Transverse colon (tissue), 4 donors: ENCODE measurements at regions of chr17 and their contacts with region 1.

Region 1: DNA sequence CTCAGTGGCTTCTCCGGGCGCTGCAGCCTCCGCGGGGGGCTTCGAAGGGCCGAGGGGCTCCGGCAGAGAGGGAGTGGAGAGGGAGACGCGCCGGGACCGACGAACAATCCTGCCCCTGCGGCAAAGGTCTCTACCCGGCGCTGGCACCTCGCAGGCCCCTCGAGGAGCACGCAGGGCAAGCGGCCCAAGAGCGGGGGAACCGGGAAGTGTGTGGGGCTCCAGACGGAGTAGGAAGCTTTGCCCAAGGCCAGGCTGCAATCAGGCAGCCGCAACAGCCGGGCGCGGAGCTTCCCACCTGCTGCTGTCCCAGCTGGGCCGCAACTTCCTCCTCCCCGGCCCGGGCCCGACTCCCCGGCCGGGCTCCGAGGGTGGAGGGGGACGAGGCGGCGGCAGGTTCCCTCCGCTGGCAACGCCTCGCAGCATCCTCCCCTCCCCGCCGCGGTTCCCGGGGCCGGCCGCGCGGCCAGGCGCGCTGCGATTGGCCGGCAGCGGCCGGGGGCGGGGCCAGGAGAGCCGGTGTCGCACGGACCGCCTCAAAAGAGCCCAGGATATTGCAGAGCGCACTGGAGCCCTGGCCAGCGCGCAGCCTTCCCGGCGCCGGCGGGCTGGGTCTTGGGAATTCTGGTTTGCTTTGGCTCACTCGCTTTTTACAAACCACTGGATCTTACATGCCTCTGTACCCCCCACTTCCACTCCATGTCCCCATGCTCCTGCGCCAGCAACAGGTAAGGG is at the start of gene KCNJ2:
- DNase-seq: peak; percentile 91
- H3K4me3 ChIP-seq: peak within 1 kb of the TSS; percentile 50 to 71 (median 55)
- H3K27ac ChIP-seq: peak within 1 kb of the TSS; percentile 86 to 93 (median 92)
- H3K4me1 ChIP-seq: peaks cover 0 to 45% (median 2%) of the 10 kb centered on the region in 4 donors
- H3K27me3 ChIP-seq: peaks cover 13% of the 10 kb centered on the region
- CTCF ChIP-seq: no peak
- EP300 ChIP-seq: no peak
- POLR2A ChIP-seq: peak; percentile 95
- total RNA-seq, gene KCNJ2: 15.4 to 37.4 (median 19.7) TPM

Region 2: GRCh38 chr17:69581061-69581961 is 587.8 kb before region 1 on chr17:
- in situ Hi-C with region 1: loop called in 2 of 4 experiments (anchors 25 kb)
- intact Hi-C with region 1: no loop called
- DNase-seq: no peak
- H3K4me3 ChIP-seq: no peak overlapping the region
- H3K27ac ChIP-seq: no peak overlapping the region
- H3K4me1 ChIP-seq: no peaks in the 10 kb centered on the region
- H3K27me3 ChIP-seq: peaks cover 19% of the 10 kb centered on the region
- CTCF ChIP-seq: no peak
- EP300 ChIP-seq: no peak
- POLR2A ChIP-seq: no peak

Region 3: DNA sequence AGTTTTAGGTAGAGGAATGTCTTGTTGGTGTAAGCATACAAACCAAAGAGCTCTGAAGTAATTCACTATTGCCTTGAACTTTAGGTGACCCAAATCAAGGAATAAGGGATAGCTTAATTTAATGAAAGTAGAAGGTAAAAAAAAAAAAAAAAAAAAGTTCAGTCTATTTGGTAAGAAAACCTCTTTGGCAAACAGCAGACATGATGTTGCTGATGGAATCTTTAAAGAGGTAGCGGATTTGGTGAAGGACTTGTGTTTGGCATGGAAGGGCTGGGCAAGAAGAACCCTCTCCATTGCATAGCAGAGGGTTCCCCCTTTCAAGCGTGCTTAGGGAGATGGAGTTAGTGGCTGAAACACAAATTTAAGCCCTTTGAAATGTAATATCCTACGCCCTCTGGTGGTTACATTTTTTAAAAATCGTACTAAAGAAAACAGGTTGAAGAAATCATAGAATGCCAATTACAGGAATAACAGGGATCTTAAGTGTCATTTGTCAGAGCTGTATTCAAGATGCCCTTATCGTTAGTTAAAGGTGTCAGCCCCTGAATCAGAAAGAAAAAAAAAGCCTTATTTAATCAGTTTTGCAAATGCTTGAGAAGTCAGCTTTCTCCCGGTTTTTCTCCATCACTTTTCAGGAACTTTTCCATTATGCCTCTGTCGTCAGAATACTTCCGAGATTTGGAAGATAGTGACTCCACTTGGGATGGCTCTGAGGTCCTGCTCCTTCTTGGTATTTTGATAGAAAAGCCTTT is 383.3 kb after region 1 on chr17:
- in situ Hi-C with region 1: loop called in 2 of 4 experiments (anchors 10 to 25 kb)
- intact Hi-C with region 1: no loop called
- DNase-seq: no peak
- H3K4me3 ChIP-seq: no peak overlapping the region
- H3K27ac ChIP-seq: no peak overlapping the region
- H3K4me1 ChIP-seq: no peaks in the 10 kb centered on the region
- H3K27me3 ChIP-seq: no peaks in the 10 kb centered on the region
- CTCF ChIP-seq: peak; percentile 50 to 66 (median 54)
- EP300 ChIP-seq: no peak
- POLR2A ChIP-seq: no peak